A549 (cell line): ENCODE measurements at regions of chr17 and their contacts with region 1.

Region 1: DNA sequence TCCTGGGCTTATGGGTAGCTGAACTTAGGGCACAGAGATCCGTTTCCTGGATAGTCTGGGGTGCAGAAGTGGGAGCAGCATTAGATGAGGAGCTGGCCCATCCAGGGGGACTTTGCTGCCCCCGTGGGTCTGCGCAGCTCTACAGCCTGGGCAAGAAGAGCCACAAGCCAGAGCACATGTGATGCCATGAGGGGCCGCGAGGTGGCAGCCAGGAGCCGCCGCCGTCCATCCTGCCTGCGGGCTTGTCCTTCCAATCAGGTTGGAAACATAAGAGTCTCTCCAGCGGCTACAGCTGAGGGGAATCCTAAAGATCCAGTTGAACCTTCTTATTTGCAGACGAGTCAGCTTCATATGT is 21.9 kb downstream of the C1QTNF1 start:
- DNase-seq: peak; percentile 78 to 89
- ATAC-seq: peak; percentile 73 to 88
- H3K4me3 ChIP-seq: no peak overlapping the region
- H3K27ac ChIP-seq: no peak overlapping the region
- H3K4me1 ChIP-seq: peaks cover 6% of the 10 kb centered on the region; the same call in 2 of the 3 replicates
- CTCF ChIP-seq: peak; percentile 92
- EP300 ChIP-seq: no peak
- POLR2A ChIP-seq: no peak
- RAD21 ChIP-seq: peak; percentile 83

Region 2: DNA sequence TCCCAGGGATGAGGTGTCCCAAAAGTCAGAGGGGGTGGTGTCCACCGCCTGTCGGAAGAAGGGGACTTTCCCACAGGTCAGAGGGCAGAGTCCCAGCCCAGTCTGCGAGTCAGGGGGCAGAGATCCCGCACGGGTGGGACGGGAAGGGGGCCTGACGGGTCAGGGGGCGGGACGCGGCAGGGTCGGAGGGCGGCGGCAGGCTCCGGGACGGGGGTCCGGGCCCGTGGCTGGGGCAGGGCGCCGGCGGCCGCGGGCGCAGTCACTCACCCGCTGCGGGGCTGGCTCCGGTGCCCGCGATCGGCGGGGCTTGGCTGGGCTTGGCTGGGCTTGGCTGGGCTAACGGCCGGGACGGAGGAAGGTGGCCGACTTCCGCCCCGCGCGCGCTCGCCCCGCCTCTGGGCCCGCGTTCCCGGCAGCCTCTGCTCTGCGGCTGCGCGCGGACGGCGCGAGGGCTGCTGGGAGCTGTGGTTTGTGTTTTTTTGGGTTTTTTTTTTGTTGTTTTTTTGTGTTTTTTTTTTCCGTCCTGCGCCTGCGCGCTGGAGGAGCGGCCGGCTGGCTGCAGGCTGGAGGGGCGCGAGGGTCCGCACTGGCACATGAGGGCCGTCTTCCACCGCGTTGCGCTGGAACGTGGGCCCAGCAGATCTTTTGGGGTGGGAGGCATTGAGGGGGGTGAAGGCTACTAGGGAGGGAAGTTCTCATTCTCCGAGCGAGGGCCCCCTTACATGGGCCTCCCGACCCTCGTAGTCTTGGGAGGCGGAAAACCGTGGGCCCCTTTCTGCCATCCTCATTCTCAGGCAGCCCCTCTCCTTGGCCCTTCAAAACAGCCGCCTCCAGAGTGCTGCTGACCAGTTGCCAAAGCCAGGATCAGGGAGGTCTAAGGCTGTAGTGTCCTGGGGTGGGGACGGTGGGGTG is 36.2 kb before region 1 on chr17 and contains the start of gene CANT1:
- CTCF ChIA-PET with region 1: interaction called, 376 read pairs
- POLR2A ChIA-PET with region 1: interaction called, 3 read pairs
- DNase-seq: peak; percentile 87 to 95
- ATAC-seq: peak; percentile 86 to 97
- H3K4me3 ChIP-seq: peak within 1 kb of the TSS; percentile 98
- H3K27ac ChIP-seq: peak within 1 kb of the TSS; percentile 98 to 99
- H3K4me1 ChIP-seq: peaks cover 31% of the 10 kb centered on the region
- CTCF ChIP-seq: no peak
- EP300 ChIP-seq: no peak
- POLR2A ChIP-seq: peak; percentile 65
- RAD21 ChIP-seq: no peak
- polyA plus RNA-seq, gene CANT1: 65.5 and 70.0 TPM in 2 replicates

Region 3: DNA sequence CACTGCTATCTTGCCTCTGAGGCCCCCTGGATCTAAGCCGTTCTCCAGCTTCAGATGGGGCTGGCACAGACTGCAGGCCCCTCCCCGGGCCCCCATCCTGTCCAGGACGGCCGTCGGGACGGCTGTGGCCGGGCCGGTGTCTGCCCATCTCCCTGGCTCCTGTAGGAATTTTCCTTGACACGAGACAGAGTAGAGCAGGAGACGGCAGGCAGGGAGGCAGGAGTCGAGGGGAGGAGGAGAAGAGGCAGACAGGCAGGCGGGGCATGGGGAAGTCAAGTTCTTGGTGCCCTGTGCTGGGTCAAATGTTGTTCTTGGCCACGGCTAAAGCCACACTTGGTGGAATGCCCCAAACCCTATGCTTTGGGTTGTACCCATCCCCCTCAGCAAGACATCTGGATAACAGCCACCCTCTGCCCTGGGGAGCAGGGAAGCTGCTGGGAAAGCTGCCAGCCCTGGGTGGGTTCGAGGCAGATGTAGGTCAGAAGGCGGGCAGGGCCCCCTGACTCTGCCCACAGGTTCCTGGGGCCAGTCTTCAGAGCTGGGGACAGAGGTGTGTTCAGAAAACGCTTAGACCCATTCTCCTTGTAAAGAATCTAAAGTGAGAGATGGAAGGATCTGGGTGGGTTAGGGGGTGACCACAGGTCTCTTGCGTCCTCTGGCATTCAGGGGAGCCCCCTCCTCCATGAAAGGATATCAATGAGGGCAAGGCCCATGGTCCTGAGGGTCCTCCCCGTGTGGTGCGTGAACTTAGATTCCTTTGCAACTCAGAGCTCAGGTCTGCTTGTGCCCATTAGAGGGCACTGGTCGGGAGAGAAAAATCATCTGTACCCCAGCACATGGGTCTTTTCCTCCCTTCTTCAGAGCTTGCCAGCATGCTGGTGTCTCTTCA is 17.6 kb before region 1 on chr17:
- CTCF ChIA-PET with region 1: interaction called, 376 read pairs
- POLR2A ChIA-PET with region 1: interaction called, 34 read pairs
- DNase-seq: no peak
- ATAC-seq: peak in 1 of 2 experiments; percentile 34; a peak in 3 of 6 replicates
- H3K4me3 ChIP-seq: no peak overlapping the region
- H3K27ac ChIP-seq: peak overlapping the region; percentile 78 to 88
- H3K4me1 ChIP-seq: peaks cover 51% of the 10 kb centered on the region
- CTCF ChIP-seq: peak; percentile 48; the same call in 1 of the 3 replicates
- EP300 ChIP-seq: no peak
- POLR2A ChIP-seq: no peak
- RAD21 ChIP-seq: 0 out of 5 replicates have a peak, but pooled peaks have one; percentile 27 to 32

Region 4: GRCh38 chr17:79074650-79075445 is 29.0 kb after region 1 on chr17 and contains the start of gene ENGASE:
- CTCF ChIA-PET with region 1: interaction called, 289 read pairs
- POLR2A ChIA-PET with region 1: interaction called, 3 read pairs
- DNase-seq: peak; percentile 95 to 98
- ATAC-seq: peak; percentile 96 to 98
- H3K4me3 ChIP-seq: peak within 1 kb of the TSS; percentile 79
- H3K27ac ChIP-seq: peak within 1 kb of the TSS; percentile 81 to 91
- H3K4me1 ChIP-seq: peaks cover 12% of the 10 kb centered on the region; the same call in 2 of the 3 replicates
- CTCF ChIP-seq: no peak
- EP300 ChIP-seq: no peak
- POLR2A ChIP-seq: peak; percentile 94
- RAD21 ChIP-seq: no peak
- polyA plus RNA-seq, gene ENGASE: 11.5 and 13.4 TPM in 2 replicates

Region 5: DNA sequence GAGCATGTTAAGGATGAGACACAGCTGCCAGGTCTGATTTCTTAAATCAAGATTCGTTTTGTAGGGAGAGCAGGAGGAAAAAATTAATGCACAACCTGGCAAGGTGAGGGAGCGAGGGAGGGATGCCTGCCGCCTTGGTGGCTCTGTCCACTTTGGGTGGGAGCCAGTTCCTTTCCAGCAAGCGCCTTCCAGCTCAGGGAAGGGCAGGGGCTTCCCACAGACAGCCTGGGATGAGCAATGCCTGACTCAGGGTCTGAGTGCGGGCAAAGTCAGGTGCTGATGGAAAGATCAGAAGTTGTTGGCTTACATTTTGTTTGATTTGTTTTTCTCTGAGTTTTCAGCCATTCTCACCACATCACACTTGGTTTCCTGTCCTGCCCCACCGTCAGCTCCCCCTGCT is 249.5 kb after region 1 on chr17:
- CTCF ChIA-PET with region 1: no interaction called
- POLR2A ChIA-PET with region 1: no interaction called
- DNase-seq: peak in 1 of 2 experiments; percentile 31
- ATAC-seq: peak; percentile 45 to 53; a peak in 5 of 6 replicates
- H3K4me3 ChIP-seq: no peak overlapping the region
- H3K27ac ChIP-seq: no peak overlapping the region
- H3K4me1 ChIP-seq: peaks cover 6% of the 10 kb centered on the region; the same call in 2 of the 3 replicates
- CTCF ChIP-seq: no peak
- EP300 ChIP-seq: no peak
- POLR2A ChIP-seq: no peak
- RAD21 ChIP-seq: no peak